Sciatic nerve (tissue), 2 donors: ENCODE measurements at regions of chr7 and their contacts with region 1.

Region 1: DNA sequence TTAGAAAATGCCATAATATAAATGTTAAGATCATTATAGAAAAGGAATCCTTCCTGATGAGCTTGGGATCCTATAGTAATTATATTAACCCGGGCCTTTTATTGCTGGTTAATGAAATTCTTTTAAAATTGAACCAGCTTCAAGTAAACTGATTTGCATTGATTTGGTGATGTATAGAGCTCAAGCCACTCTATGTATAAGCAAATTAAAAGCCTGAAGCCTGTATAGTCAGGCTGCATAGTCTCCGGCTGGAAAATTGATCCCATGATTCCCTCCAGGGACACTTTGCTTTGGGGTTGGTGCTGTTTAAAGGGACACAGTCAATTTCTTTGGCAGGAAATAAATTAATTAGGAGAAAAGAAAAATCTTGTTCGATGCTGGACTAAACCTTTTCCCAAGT is 199.1 kb downstream of the HERPUD2 start:
- DNase-seq: no peak
- ATAC-seq: no peak

Region 2: DNA sequence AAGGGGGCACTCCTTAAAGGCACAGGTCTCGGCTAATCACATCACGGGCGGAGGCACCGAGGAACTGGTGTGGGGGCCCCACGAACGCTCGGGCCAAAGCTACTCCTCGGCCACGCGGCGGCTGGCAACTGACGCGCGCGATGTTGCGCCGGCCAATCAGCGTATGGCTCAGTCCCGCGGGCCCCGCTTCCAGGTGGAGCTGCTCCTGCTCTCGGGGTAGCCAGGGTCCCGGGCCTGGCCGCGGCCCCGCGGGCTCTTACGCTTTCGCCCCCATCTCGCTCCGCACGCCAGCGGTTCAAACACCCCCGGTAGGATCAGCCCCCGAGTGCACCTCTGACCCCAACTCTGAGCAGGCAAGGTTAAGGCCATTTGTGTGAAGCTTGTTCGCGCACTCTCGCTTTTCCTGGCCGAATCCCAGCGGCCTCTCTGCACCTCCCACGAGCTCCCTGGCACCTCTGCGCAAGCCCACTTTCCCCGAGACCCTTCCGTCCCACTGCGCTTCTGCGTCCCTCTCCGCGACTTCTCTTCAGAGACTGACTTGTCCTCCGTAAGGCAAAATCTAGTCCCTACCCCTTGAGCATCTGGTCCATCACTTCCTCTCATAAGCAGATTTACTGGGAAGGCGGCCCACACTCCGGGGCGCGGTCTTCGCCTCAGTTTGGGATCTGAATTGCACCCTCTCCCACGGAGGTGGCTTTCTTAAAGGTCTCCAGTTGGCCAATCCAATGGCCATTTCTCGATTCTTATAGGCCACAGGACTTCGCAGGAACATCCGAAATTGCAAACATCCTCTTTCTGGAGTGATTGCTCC is 41.1 kb before region 1 on chr7:
- intact Hi-C with region 1: loop called (anchors 1 kb)
- DNase-seq: no peak
- ATAC-seq: no peak

Region 3: GRCh38 chr7:36749282-36749960 is 1253.6 kb after region 1 on chr7:
- intact Hi-C with region 1: no loop called
- DNase-seq: no peak
- ATAC-seq: peak; percentile 38